IMR-90 (cell line): ENCODE measurements at regions of chr5 and their contacts with region 1.

Region 1: DNA sequence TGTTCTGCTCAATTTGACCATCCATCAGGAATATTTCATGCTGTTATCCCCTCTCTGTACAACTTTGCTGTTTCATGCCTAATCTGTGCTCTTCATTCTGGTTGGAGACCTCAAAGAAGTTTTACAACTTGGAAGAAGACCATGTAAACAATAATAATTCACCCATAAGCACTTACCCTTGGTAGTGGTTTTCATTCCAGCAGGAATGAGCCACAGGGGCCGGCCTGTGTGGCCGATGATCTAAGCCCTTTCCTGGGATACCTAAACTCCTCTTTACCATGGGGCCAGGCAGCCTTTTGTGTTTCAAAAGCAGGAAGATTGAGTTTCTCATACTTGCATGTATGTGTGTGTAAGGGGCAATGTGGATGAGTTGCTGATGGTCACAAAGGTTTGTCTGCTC is 165.0 kb downstream of the FGF1 start:
- DNase-seq: peak; percentile 78
- ATAC-seq: peak; percentile 95
- H3K4me3 ChIP-seq: no peak overlapping the region
- H3K27ac ChIP-seq: no peak overlapping the region
- H3K4me1 ChIP-seq: peaks cover 5% of the 10 kb centered on the region; the same call in 1 of the 2 replicates
- H3K27me3 ChIP-seq: no peaks in the 10 kb centered on the region
- CTCF ChIP-seq: no peak
- POLR2A ChIP-seq: no peak
- RAD21 ChIP-seq: no peak

Region 2: DNA sequence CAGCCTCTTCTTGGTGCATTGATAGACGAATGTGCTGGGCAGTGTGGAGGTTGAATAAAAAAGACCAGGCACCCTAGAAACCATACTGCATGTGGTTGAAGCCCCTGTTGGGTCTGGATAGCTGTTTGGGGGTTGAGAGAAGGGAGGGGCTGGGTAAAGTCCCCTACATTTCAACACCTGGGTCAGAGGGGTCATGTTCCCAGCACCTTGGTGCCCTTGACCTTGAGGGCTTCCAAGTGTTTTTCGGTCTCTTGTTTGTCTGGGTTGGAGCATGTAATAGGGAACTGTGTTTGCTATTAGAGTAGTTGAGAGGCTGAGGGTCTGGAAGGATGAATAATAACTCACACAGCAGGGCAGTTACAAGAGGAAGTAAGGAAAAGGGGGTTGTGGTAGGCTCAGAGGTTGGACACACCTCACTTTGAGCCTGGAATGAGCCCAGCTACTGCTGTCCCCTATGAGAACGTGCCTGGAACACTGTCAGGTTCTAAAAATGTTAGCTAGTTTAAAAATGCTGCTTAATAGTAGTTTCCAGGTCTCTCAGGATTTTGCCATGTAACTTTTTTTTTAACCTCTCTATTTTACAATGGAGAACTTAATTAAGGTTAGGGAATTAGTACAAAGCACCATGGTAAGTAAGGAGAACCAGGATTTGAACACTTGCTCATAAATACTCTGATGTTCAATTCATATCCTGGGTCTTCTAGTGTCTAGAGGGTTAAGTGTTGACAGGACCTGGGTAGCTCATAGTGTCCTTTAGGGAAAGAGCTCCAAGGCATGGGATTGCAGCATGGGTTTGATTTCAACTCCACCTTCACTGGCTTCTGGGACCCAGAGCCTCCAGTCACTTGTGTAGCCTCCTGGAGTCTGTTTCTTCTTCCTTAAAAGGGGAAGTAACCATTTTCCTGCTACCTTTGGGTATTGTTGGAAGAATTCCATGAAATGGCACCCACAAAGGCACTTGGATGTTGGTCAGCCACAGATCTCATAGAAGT is 40.7 kb before region 1 on chr5:
- CTCF ChIA-PET with region 1: no interaction called
- POLR2A ChIA-PET with region 1: no interaction called
- dilution Hi-C with region 1: no loop called
- in situ Hi-C with region 1: no loop called
- intact Hi-C with region 1: loop called (anchors 1 kb)
- DNase-seq: no peak
- ATAC-seq: no peak
- H3K4me3 ChIP-seq: no peak overlapping the region
- H3K27ac ChIP-seq: no peak overlapping the region
- H3K4me1 ChIP-seq: peaks cover 5% of the 10 kb centered on the region
- H3K27me3 ChIP-seq: no peaks in the 10 kb centered on the region
- CTCF ChIP-seq: no peak
- POLR2A ChIP-seq: no peak
- RAD21 ChIP-seq: no peak